Vagina (tissue), 2 donors: ENCODE measurements at regions of chr12 and their contacts with region 1.

Region 1: DNA sequence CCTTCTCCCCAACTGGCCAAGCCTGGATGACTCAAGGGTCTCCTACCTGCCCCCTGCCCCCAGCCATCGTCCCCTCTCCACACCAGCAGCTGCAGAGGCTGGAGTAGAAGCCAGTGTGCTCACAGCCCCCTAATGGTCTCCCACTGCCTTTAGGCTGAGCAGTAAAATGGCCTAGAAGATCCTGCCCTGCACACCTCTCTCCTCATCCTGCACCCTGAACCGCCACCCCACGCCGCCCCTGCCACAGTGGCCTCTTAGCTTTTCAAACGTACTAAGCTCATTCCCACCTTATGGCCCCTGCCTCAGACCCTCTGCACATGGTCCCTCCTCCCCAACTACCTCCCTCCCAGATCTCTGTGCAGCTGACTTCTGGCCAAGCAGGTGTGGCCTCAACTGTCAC is 46.3 kb downstream of the RBM19 start:
- DNase-seq: no peak
- H3K4me3 ChIP-seq: no peak overlapping the region
- H3K27ac ChIP-seq: no peak overlapping the region
- H3K4me1 ChIP-seq: no peaks in the 10 kb centered on the region
- H3K27me3 ChIP-seq: no peaks in the 10 kb centered on the region
- CTCF ChIP-seq: no peak
- POLR2A ChIP-seq: no peak

Region 2: GRCh38 chr12:111964935-111965334 is 1954.9 kb before region 1 on chr12:
- intact Hi-C with region 1: no loop called
- DNase-seq: no peak
- H3K4me3 ChIP-seq: no peak overlapping the region
- H3K27ac ChIP-seq: no peak overlapping the region
- H3K4me1 ChIP-seq: no peaks in the 10 kb centered on the region
- H3K27me3 ChIP-seq: no peaks in the 10 kb centered on the region
- CTCF ChIP-seq: no peak
- POLR2A ChIP-seq: no peak

Region 3: DNA sequence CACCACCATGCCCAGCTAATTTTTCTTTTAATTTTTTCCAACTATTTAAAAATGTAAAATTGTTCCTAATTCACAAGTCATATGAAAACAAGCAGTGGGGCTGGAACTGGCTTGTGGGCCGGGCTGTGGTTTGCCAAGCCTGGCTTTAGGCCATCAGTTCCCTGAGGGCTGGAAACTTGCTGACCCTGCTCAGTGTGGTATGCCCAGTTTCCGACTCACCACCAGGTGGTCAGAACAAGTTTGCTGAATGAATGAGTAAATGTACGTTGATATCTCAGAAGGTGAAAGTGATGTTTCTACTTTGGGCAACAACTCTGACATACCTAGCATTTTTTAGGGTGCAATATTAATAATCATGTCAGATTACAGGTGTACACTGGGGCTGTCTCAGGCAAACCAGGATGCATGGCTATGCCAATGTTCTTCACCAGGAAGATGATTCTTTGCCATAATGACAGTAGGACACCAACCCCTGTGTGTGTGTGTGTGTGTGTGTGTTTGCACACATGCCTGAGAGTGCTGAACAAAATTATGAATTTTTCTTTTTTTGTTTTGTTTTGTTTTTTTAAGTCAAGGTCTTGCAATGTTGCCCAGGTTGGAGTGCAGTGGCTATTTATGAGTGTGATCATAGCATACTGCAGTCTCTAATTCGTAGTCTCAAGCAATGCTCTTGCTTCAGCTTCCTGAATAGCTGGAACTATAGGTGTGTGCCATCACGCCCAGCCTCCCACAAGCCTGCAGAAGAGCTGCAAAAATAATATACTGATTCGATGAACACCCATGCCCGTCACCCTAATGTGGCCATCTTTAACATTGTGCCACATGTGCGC is 1394.9 kb before region 1 on chr12:
- intact Hi-C with region 1: loop called (anchors 5 kb)
- DNase-seq: no peak
- H3K4me3 ChIP-seq: no peak overlapping the region
- H3K27ac ChIP-seq: no peak overlapping the region
- H3K4me1 ChIP-seq: no peaks in the 10 kb centered on the region
- H3K27me3 ChIP-seq: no peaks in the 10 kb centered on the region
- CTCF ChIP-seq: no peak
- POLR2A ChIP-seq: no peak